Caco-2 (cell line): ENCODE measurements at regions of chr1 and their contacts with region 1.

Region 1: DNA sequence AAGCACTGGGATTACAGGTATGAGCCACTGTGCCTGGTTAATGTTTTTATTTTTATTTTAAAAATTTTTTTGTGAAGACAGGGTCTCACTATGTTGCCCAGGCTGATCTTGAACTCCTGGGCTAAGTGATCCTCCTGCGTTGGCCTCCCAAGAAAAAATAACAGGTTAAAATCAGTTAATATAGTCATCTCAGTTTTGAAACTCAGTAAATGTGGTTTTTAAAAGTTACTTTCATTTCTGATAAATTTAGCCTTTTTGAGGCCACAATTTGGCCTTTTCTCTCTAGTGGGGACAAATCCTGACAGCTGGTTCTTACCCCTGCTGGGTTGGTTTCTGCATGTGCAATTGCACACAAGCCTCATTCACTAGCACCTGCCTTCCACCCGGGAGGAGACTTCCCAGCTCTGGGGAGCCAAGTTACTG is 13.3 kb downstream of the PMF1 start:
- DNase-seq: no peak
- H3K4me3 ChIP-seq: no peak overlapping the region
- H3K4me3 Mint-ChIP-seq: no peak overlapping the region
- H3K27ac Mint-ChIP-seq: no peak overlapping the region
- H3K4me1 ChIP-seq: peaks cover 6% of the 10 kb centered on the region; the same call in 1 of the 2 replicates
- H3K4me1 Mint-ChIP-seq: peaks cover 2% of the 10 kb centered on the region
- H3K27me3 ChIP-seq: no peaks in the 10 kb centered on the region
- H3K27me3 Mint-ChIP-seq: no peaks in the 10 kb centered on the region
- CTCF ChIP-seq: no peak

Region 2: GRCh38 chr1:155911156-155912055 is 314.7 kb before region 1 on chr1 and contains the start of gene RIT1:
- CTCF ChIA-PET with region 1: no interaction called
- POLR2A ChIA-PET with region 1: no interaction called
- intact Hi-C with region 1: no loop called
- DNase-seq: peak; percentile 92 to 93
- H3K4me3 ChIP-seq: peak within 1 kb of the TSS; percentile 57
- H3K4me3 Mint-ChIP-seq: peak within 1 kb of the TSS; percentile 89
- H3K27ac Mint-ChIP-seq: peak within 1 kb of the TSS; percentile 84
- H3K4me1 ChIP-seq: 0 out of 2 replicates have a peak, but pooled peaks cover 7% of the 10 kb centered on the region
- H3K4me1 Mint-ChIP-seq: peaks cover 15% of the 10 kb centered on the region
- H3K27me3 ChIP-seq: no peaks in the 10 kb centered on the region
- H3K27me3 Mint-ChIP-seq: no peaks in the 10 kb centered on the region
- CTCF ChIP-seq: peak in 1 of 2 experiments; percentile 17
- total RNA-seq, gene RIT1: 21.9 and 23.0 TPM in 2 replicates

Region 3: DNA sequence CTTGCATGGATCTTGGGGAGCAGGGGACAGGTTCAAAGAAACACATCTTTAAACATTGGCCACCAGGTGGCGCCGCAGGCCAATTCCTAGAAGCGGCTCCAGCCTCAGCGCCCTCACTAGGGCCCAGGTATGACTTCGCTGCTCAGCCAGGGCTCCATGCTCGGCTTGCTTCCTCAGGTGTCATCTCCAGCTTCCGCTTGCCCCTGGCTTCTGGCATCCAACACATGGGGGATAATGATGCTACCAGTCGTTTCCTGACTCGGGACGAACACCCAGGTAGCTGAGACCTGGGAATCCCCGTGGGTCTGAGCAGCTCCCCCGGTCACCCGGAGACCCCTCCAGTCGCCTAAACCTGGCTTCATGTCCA is 135.3 kb before region 1 on chr1:
- CTCF ChIA-PET with region 1: interaction called, 4 read pairs
- POLR2A ChIA-PET with region 1: no interaction called
- intact Hi-C with region 1: loop called (anchors 2 kb)
- DNase-seq: peak; percentile 86 to 89
- H3K4me3 ChIP-seq: no peak overlapping the region
- H3K4me3 Mint-ChIP-seq: no peak overlapping the region
- H3K27ac Mint-ChIP-seq: peak overlapping the region; percentile 60
- H3K4me1 ChIP-seq: peaks cover 24% of the 10 kb centered on the region
- H3K4me1 Mint-ChIP-seq: peaks cover 29% of the 10 kb centered on the region
- H3K27me3 ChIP-seq: no peaks in the 10 kb centered on the region
- H3K27me3 Mint-ChIP-seq: no peaks in the 10 kb centered on the region
- CTCF ChIP-seq: peak; percentile 76 to 92

Region 4: DNA sequence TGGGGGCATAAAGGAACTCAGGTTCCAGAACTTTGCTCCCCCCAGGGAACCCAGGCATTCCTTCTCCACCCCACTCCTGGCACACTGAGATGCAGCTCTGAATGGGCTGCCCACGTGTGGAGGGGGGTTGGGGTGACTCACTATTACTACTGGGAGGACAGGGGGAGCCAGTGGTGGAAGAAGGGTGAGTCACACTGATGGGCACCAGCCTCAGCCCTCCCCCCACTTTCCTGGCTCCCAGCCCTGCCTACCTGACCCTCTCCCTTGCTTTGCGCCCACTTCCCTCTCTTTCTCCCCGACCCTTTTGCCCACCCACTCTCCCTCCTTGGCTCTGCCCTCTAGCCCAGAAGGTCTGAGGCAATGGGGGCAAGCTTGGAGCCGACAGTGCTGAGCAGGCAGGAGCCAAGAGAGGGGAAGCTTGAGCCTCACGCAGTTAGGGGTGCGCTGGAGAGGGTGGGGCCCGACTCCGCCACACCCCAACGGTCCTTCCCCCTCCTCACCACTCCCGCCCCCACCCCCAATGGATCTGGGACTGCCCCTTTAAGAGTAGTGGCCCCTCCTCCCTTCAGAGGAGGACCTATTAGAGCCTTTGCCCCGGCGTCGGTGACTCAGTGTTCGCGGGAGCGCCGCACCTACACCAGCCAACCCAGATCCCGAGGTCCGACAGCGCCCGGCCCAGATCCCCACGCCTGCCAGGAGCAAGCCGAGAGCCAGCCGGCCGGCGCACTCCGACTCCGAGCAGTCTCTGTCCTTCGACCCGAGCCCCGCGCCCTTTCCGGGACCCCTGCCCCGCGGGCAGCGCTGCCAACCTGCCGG is 111.8 kb before region 1 on chr1 and contains the start of gene LMNA:
- CTCF ChIA-PET with region 1: interaction called, 15 read pairs
- POLR2A ChIA-PET with region 1: no interaction called
- intact Hi-C with region 1: no loop called
- DNase-seq: peak; percentile 83
- H3K4me3 ChIP-seq: peak within 1 kb of the TSS; percentile 98
- H3K4me3 Mint-ChIP-seq: peak within 1 kb of the TSS; percentile 95
- H3K27ac Mint-ChIP-seq: peak within 1 kb of the TSS; percentile 63
- H3K4me1 ChIP-seq: peaks cover 35% of the 10 kb centered on the region
- H3K4me1 Mint-ChIP-seq: peaks cover 26% of the 10 kb centered on the region
- H3K27me3 ChIP-seq: no peaks in the 10 kb centered on the region
- H3K27me3 Mint-ChIP-seq: no peaks in the 10 kb centered on the region
- CTCF ChIP-seq: no peak
- total RNA-seq, gene LMNA: 112 and 113 TPM in 2 replicates

Region 5: DNA sequence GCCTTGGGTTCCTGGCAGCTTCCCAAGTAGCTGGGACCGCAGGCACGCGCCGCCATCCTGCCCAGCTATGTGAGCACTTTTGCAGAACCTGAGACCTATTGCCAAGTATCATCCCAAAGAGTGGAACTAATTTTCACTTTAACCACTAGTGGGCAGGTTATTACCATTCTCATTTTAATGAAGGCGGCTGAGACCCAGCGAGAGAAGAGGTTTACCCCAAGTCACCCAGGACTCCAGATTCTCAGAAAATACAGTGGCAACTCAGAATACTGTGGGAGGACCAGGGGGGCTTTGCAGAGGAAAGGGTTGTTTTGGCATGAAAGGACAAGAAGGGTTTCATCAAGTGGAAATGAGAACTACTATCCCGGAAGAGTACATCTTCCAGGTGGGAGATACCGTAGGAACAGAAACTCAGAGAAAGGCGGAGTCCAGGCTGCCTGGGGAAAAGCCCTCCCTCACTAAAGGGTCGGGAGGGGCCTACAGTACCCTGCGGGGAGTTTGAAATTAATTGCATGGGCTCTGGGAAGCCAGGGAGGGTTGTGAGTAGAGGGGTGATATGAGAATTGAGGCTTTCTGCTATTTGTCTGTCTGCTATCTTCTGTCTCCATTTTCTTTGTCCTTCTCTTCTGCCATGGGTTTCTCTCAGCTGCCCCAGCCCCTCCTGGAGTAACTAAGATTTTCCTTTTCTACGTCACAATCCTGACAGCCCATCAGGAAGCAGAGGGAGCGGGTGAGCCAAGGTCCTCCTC is 79.9 kb before region 1 on chr1:
- CTCF ChIA-PET with region 1: interaction called, 73 read pairs
- POLR2A ChIA-PET with region 1: interaction called, 11 read pairs
- intact Hi-C with region 1: loop called (anchors 1 kb)
- DNase-seq: peak in 1 of 2 experiments; percentile 74
- H3K4me3 ChIP-seq: peak overlapping the region; percentile 22; the same call in 1 of the 2 replicates
- H3K4me3 Mint-ChIP-seq: peak overlapping the region; percentile 68
- H3K27ac Mint-ChIP-seq: peak overlapping the region; percentile 88
- H3K4me1 ChIP-seq: peaks cover 11% of the 10 kb centered on the region
- H3K4me1 Mint-ChIP-seq: peaks cover 20% of the 10 kb centered on the region
- H3K27me3 ChIP-seq: no peaks in the 10 kb centered on the region
- H3K27me3 Mint-ChIP-seq: no peaks in the 10 kb centered on the region
- CTCF ChIP-seq: peak; percentile 65 to 78

Region 6: DNA sequence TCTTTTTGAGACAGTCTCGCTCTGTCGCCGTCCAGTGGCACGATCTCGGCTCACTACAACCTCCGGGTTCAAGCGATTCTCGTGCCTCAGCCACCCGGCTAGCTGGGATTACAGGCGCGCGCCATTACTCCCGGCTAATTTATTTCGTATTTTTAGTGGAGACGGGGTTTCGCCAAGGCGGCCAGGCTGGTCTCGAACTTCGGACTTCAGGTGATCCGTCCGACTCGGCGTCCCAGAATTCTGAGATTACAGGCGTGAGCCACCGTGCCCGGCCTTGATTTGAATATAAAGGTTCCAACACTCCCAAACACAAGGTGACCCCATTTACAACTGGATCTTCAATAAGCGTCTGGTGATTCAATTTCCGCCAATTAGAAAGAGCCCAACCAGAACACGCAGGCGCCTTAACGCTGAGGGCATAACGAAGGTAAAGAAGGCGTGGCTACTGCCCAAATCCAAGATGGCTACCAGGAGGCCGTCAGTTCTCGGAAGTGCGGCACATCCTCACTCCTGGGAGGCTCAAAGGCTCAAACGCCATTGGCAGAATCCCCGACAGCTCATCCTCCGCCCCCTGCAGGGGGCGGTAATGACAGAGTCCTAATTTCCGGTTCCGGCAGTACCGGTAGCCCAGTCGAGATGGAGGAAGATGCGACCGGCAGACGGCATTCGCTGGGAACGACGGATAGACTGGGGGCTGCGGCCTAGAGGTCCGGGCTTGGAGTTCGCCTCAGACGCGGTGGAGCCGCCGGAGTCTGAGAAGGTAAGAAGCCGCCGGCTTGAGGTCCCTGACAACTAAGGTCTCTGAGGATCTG is 32.4 kb before region 1 on chr1 and contains the start of gene SLC25A44:
- CTCF ChIA-PET with region 1: interaction called, 15 read pairs
- POLR2A ChIA-PET with region 1: interaction called, 3 read pairs
- intact Hi-C with region 1: no loop called
- DNase-seq: peak; percentile 97
- H3K4me3 ChIP-seq: peak within 1 kb of the TSS; percentile 85
- H3K4me3 Mint-ChIP-seq: peak within 1 kb of the TSS; percentile 92
- H3K27ac Mint-ChIP-seq: peak within 1 kb of the TSS; percentile 82
- H3K4me1 ChIP-seq: peaks cover 9% of the 10 kb centered on the region; the same call in 1 of the 2 replicates
- H3K4me1 Mint-ChIP-seq: peaks cover 16% of the 10 kb centered on the region
- H3K27me3 ChIP-seq: no peaks in the 10 kb centered on the region
- H3K27me3 Mint-ChIP-seq: no peaks in the 10 kb centered on the region
- CTCF ChIP-seq: peak; percentile 51 to 69
- total RNA-seq, gene SLC25A44: 29.3 and 31.1 TPM in 2 replicates

Region 7: DNA sequence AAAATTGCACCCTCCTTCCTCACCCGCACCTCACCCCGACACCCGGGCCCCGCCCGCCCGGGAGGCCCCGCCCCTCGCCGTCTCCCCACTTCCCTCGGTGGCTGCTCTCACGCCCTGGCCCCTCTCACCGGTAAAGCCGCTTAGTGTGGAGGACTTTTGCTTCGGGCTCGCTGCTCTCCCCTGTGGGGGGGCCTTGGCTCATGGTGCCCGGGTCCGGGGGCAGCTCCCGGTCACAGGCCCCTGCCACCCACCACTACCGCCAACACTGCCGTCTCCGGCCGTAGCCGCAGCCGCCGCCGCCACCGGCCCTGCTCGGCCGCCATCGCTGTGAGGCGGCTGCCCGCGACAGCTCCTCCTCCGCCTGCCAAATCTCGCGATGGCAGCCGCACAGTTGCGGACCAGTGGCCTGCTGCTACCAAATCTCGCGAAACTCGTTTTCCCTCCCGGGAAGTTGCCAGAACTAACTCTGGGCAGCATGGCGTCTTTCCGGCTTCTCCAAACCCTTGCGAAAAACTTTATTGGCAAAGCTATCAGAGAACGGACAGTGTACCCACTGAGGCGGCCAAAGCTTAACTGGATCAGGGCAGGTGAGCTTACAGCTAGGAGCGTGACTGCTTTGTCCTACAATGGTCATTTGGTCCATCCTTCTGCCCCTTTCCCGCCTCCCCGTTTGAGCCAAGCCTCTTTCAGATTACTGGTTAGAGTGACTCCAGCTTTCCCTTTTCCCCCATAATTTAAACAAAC is 56.5 kb after region 1 on chr1 and contains the start of gene SMG5:
- CTCF ChIA-PET with region 1: interaction called, 22 read pairs
- POLR2A ChIA-PET with region 1: no interaction called
- intact Hi-C with region 1: no loop called
- DNase-seq: peak; percentile 98
- H3K4me3 ChIP-seq: peak within 1 kb of the TSS; percentile 78
- H3K4me3 Mint-ChIP-seq: peak within 1 kb of the TSS; percentile 78
- H3K27ac Mint-ChIP-seq: peak within 1 kb of the TSS; percentile 61
- H3K4me1 ChIP-seq: peaks cover 24% of the 10 kb centered on the region
- H3K4me1 Mint-ChIP-seq: peaks cover 17% of the 10 kb centered on the region
- H3K27me3 ChIP-seq: no peaks in the 10 kb centered on the region
- H3K27me3 Mint-ChIP-seq: no peaks in the 10 kb centered on the region
- CTCF ChIP-seq: no peak
- total RNA-seq, gene SMG5: 146 and 155 TPM in 2 replicates